ENCODE measurements at regions of chr4 and their contacts with region 1.

Region 1: DNA sequence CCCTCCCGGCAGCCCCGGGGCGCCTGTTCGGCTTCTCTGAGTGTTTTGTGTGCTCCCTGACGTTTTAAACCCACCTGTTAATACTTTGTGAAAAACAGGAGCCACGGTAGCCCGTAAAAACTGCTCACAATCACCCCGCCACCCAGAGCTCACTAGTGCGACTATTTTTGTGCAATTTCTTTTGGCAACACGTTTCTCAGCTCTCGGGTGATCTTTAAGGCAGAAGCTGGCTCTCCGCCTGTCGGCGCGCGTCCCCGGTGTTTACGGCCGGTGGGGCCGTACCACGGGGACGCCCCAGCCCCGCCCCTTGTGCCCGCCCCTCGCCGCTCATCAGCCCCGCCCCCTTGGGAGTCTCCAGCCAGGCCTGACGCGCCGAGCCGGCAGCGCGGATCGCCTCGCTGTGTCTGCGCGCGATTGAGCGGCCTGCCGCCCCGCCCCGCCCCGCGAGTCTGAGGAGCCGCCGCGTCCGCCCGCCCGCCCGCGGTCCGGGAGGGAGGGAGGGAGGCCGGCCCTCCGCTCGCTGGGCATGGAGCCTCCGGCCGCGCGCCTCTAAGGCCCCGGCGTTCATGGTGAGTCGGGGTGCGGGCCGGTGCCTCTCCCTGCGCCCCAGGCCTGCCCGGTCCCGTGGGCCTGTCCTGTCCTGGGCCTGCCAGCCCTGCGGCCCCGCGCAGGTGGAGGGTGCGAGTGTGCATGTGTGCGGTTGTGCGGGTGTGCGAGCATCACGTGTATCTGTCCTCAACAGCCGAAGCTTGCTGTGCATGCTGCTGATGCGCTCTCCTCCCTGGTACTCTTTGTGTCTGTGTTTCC is 56.2 kb upstream of the TADA2B start:
- DNase-seq: peak; percentile 87 to 95 (median 92)
- ATAC-seq: peak; percentile 98
- H3K4me3 ChIP-seq: peak overlapping the region; percentile 82
- H3K4me3 Mint-ChIP-seq: peak overlapping the region; percentile 94 to 100 (median 97)
- H3K27ac ChIP-seq: peak overlapping the region; percentile 86
- H3K27ac Mint-ChIP-seq: peak overlapping the region; percentile 89 to 99 (median 98)
- H3K4me1 ChIP-seq: peaks cover 29 to 37% of the 10 kb centered on the region in 2 donors
- H3K4me1 Mint-ChIP-seq: peaks cover 57 to 93% (median 84%) of the 10 kb centered on the region in 7 donors
- H3K27me3 ChIP-seq: no peaks in the 10 kb centered on the region
- H3K27me3 Mint-ChIP-seq: no peaks in the 10 kb centered on the region

Region 2: GRCh38 chr4:6709230-6710114 is 277.5 kb before region 1 on chr4 and contains the start of gene MRFAP1L1:
- CTCF ChIA-PET with region 1: no interaction called
- POLR2A ChIA-PET with region 1: no interaction called
- intact Hi-C with region 1: loop called in 1 of 2 experiments (anchors 2 kb)
- DNase-seq: peak; percentile 91 to 98 (median 97)
- ATAC-seq: peak; percentile 99
- H3K4me3 ChIP-seq: peak within 1 kb of the TSS; percentile 93
- H3K4me3 Mint-ChIP-seq: peak within 1 kb of the TSS; percentile 96 to 100 (median 98)
- H3K27ac ChIP-seq: peak within 1 kb of the TSS; percentile 86
- H3K27ac Mint-ChIP-seq: peak within 1 kb of the TSS; percentile 95 to 99 (median 98)
- H3K4me1 ChIP-seq: peaks cover 38 to 48% of the 10 kb centered on the region in 2 donors
- H3K4me1 Mint-ChIP-seq: peaks cover 45 to 71% (median 65%) of the 10 kb centered on the region in 7 donors
- H3K27me3 ChIP-seq: no peaks in the 10 kb centered on the region
- H3K27me3 Mint-ChIP-seq: peaks cover 0 to 8% (median 0%) of the 10 kb centered on the region in 5 donors
- total RNA-seq, gene MRFAP1L1: 24.8 to 124 (median 73.6) TPM

Region 3: GRCh38 chr4:6926681-6927478 is 60.1 kb before region 1 on chr4:
- CTCF ChIA-PET with region 1: interaction called, 3 read pairs
- POLR2A ChIA-PET with region 1: interaction called, 3 read pairs
- intact Hi-C with region 1: loop called in 1 of 2 experiments (anchors 5 kb)
- DNase-seq: peak in 7 of 9 donors; percentile 25 to 75 (median 43)
- ATAC-seq: peak; percentile 82
- H3K4me3 ChIP-seq: peak overlapping the region; percentile 36
- H3K4me3 Mint-ChIP-seq: peak overlapping the region; percentile 64 to 92 (median 79)
- H3K27ac ChIP-seq: peak overlapping the region; percentile 56
- H3K27ac Mint-ChIP-seq: peak overlapping the region; percentile 65 to 95 (median 87)
- H3K4me1 ChIP-seq: peaks cover 26 to 48% of the 10 kb centered on the region in 2 donors
- H3K4me1 Mint-ChIP-seq: peaks cover 68 to 90% (median 79%) of the 10 kb centered on the region in 7 donors
- H3K27me3 ChIP-seq: no peaks in the 10 kb centered on the region
- H3K27me3 Mint-ChIP-seq: no peaks in the 10 kb centered on the region

Region 4: GRCh38 chr4:6942238-6942800 is 44.7 kb before region 1 on chr4:
- CTCF ChIA-PET with region 1: interaction called, 3 read pairs
- POLR2A ChIA-PET with region 1: interaction called, 10 read pairs
- intact Hi-C with region 1: loop called (anchors 1 to 2 kb)
- DNase-seq: peak in 8 of 9 donors; percentile 47 to 76 (median 64)
- ATAC-seq: peak; percentile 87
- H3K4me3 ChIP-seq: peak overlapping the region; percentile 46
- H3K4me3 Mint-ChIP-seq: peak overlapping the region; percentile 73 to 91 (median 83)
- H3K27ac ChIP-seq: peak overlapping the region; percentile 57
- H3K27ac Mint-ChIP-seq: peak overlapping the region; percentile 76 to 94 (median 90)
- H3K4me1 ChIP-seq: peaks cover 46 to 51% of the 10 kb centered on the region in 2 donors
- H3K4me1 Mint-ChIP-seq: peaks cover 48 to 85% (median 74%) of the 10 kb centered on the region in 7 donors
- H3K27me3 ChIP-seq: no peaks in the 10 kb centered on the region
- H3K27me3 Mint-ChIP-seq: no peaks in the 10 kb centered on the region

Region 5: GRCh38 chr4:6974138-6974848 is 12.7 kb before region 1 on chr4:
- CTCF ChIA-PET with region 1: interaction called, 10 read pairs
- POLR2A ChIA-PET with region 1: interaction called, 9 read pairs
- intact Hi-C with region 1: loop called (anchors 1 kb)
- DNase-seq: peak; percentile 55 to 82 (median 74)
- ATAC-seq: peak; percentile 100
- H3K4me3 ChIP-seq: no peak overlapping the region
- H3K4me3 Mint-ChIP-seq: peak overlapping the region in 3 of 10 donors; percentile 11 to 45 (median 18)
- H3K27ac ChIP-seq: no peak overlapping the region
- H3K27ac Mint-ChIP-seq: peak overlapping the region in 5 of 9 donors; percentile 43 to 86 (median 69)
- H3K4me1 ChIP-seq: peaks cover 0 to 9% of the 10 kb centered on the region in 2 donors
- H3K4me1 Mint-ChIP-seq: peaks cover 5 to 38% (median 22%) of the 10 kb centered on the region in 7 donors
- H3K27me3 ChIP-seq: no peaks in the 10 kb centered on the region
- H3K27me3 Mint-ChIP-seq: no peaks in the 10 kb centered on the region

Region 6: DNA sequence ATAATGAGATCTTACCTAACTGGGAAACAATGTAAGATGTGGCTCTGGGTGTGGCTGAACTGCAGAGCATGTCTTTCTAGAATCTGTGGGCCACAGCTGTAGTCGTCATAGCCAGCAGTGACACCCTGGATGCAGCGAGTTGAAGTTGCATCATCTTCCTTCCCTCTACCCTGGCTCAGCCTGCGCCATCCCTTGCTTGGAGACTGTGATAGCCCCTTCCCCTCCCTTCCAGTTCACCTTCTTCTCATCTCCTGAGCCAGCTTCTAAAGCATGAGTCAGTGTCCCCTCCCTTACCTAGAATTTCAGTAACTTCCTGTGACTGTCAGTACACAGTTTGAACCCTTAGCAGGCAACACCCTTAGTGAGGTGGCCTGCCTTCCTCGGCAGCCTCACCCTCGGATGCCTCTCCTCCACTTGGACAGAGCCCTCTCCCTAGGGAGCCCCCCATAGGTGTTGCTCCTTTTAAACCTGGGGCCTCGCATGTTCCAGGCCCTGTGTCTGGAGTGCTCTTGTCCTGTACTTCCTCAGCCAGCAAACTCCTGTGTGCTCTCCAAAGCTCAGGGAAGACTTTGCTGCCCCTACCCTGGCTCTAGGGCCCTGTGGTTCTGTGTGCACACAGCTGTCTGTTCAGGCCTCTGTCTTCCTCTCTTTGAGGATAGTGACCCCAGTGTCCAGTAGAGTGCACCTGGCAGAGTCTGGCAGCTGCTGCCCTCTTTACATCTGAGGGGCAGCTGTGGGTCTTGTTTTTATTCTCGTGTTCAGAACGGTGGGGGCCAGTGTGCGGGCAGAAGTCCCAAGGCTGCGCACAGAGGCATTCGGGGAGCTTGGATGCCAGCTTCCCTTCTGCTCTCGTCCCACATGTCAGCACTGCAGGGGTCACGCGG is 12.4 kb after region 1 on chr4:
- CTCF ChIA-PET with region 1: no interaction called
- POLR2A ChIA-PET with region 1: interaction called, 3 read pairs
- intact Hi-C with region 1: loop called in 1 of 2 experiments (anchors 1 kb)
- DNase-seq: peak in 4 of 9 donors; percentile 8 to 47 (median 14)
- ATAC-seq: peak; percentile 87
- H3K4me3 ChIP-seq: no peak overlapping the region
- H3K4me3 Mint-ChIP-seq: peak overlapping the region in 4 of 10 donors; percentile 4 to 69 (median 17)
- H3K27ac ChIP-seq: peak overlapping the region; percentile 44
- H3K27ac Mint-ChIP-seq: peak overlapping the region in 7 of 9 donors; percentile 44 to 90 (median 61)
- H3K4me1 ChIP-seq: no peaks in the 10 kb centered on the region
- H3K4me1 Mint-ChIP-seq: peaks cover 0 to 41% (median 10%) of the 10 kb centered on the region in 7 donors
- H3K27me3 ChIP-seq: no peaks in the 10 kb centered on the region
- H3K27me3 Mint-ChIP-seq: no peaks in the 10 kb centered on the region

Region 7: DNA sequence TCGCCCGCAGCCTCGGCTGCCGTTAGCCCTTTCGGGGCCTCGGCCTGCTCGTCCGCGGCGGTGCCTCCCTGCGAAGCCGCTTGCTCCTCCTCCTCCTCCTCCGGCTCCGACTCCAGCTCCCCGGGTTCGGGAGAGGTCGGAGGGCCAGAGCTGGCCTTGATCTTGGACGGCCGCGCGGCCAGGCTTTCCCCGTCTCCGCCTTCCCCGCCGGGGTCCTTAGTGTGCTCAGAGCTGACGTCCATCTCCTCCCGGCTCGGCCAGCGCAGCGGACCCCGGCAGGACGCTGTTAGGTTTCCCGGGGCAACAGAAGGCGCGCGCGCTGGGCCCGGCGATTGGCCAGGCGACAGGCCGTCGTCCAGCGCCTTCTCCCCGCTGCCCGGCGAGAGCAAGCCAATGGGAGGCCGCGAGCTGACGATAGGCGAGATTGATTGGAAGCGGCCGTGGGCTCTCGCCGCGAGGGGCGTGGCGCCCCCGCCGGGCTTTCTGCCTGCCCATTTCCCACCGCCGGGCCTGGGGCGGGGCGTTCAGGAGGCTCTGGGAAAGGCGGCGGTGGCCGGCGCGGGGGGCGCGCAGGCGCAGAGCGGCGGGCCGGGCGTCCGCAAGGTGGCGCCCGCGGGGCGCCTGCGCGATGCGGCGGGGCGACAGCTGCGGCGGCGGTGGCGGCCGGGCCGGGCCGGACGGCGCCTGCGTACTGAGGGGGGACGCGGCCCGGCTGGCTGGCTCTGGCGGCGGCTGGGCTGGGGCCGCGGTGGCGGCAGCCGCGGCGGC is 55.9 kb after region 1 on chr4 and contains the start of gene TADA2B:
- CTCF ChIA-PET with region 1: interaction called, 3 read pairs
- POLR2A ChIA-PET with region 1: interaction called, 19 read pairs
- intact Hi-C with region 1: loop called (anchors 1 kb)
- DNase-seq: peak; percentile 79 to 99 (median 88)
- ATAC-seq: peak; percentile 89
- H3K4me3 ChIP-seq: peak within 1 kb of the TSS; percentile 84
- H3K4me3 Mint-ChIP-seq: peak within 1 kb of the TSS; percentile 90 to 95 (median 92)
- H3K27ac ChIP-seq: peak within 1 kb of the TSS; percentile 85
- H3K27ac Mint-ChIP-seq: peak within 1 kb of the TSS; percentile 80 to 92 (median 89)
- H3K4me1 ChIP-seq: peaks cover 33 to 40% of the 10 kb centered on the region in 2 donors
- H3K4me1 Mint-ChIP-seq: peaks cover 38 to 58% (median 52%) of the 10 kb centered on the region in 7 donors
- H3K27me3 ChIP-seq: no peaks in the 10 kb centered on the region
- H3K27me3 Mint-ChIP-seq: peaks cover 0 to 15% (median 0%) of the 10 kb centered on the region in 5 donors
- total RNA-seq, gene TADA2B: 26.8 to 49.0 (median 41.5) TPM